Heart right ventricle (tissue), 16 donors: ENCODE measurements at regions of chr17 and their contacts with region 1.

Region 1: DNA sequence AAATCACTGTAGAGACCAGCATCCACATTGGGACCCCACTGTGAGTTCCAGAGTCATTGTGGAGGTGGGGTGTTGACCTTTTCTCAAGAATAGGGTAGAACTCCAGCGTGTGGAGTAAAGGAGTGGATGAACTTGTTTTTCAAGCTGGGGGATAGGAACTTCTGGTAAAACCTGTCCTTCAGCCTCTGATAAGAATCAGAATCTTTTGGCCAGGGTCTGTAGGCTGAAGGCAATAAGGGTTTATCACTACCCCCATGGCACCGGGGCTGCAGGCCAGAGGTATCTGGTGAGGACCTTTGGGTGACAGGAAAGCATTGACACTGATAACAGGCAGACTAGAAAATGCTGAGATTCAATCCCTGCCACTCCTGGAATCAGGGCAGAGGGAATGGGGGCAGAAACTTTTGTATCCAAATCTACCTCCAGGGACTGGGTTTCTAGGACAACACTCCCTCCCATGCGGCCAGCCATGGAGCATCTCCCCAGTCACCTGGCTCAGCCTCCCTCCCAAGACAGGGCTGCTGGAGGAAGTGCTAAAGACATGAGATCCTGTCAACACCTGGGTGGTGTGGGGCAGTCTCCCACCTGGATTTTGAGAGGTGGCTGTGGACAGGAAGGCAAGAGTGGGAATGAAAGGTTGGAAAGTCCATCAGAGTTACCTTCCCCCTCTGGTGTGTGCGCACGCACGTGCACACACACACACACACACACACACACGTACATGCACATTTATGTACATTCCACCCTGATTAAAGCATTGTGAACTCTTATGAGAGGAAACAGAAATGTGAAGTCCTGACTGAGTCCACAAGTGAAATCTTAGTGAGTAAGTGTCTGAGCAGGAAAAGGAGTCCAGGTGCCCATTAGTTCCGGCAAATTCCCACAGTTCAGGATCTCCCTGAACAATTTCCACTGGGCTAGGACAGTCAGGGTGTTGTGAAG is 53.1 kb upstream of the MARCHF10 start:
- DNase-seq: no peak
- ATAC-seq: no peak
- H3K4me3 ChIP-seq: no peak overlapping the region
- H3K27ac ChIP-seq: no peak overlapping the region
- H3K4me1 ChIP-seq: no peaks in the 10 kb centered on the region
- H3K27me3 ChIP-seq: peaks cover 0 to 7% (median 0%) of the 10 kb centered on the region in 7 donors
- CTCF ChIP-seq: no peak

Region 2: DNA sequence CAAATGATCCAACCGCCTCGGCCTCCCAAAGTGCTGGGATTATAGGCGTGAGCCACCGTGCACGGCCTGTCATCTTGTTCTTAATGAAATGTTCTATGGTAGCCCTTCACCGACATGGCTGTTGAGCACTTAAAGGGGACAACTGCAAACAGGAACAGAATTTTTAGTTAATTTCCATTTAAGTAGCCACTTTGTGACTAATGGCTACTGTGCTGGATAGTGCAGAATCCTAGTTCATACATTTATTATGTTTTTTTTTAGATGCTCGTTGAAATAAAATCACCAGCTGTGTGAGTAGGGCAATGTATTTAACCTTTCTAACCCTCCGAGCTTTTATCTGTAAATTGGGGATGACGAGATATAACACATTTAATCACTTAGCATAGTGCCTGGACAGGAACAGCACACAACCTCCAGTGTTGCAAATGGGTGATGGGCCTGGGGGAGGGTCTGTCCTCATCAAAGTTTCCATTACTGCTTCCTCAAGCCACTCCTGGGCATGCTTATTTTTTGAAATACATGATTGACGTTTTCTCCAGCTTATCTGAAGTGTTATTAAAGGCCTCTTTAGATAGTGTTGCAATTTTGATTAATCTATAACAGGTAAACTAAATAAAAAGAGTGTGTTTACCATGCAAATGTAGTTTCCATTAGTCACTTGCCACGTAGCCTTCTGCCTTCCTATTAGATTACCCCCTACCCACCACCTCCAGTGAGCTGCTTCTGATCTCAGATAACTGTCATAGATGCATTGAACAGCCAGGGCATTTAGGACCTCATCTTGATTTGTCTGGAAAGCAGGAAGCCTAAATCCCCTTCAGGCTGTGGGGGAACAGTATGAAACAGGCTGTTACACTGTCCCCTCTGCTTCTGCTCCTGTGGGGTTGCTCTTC is 62.3 kb after region 1 on chr17:
- intact Hi-C with region 1: loop called in 1 of 10 experiments (anchors 10 kb)
- DNase-seq: no peak
- ATAC-seq: no peak
- H3K4me3 ChIP-seq: no peak overlapping the region
- H3K27ac ChIP-seq: no peak overlapping the region
- H3K4me1 ChIP-seq: no peaks in the 10 kb centered on the region
- H3K27me3 ChIP-seq: peaks cover 0 to 3% (median 0%) of the 10 kb centered on the region in 7 donors
- CTCF ChIP-seq: no peak

Region 3: GRCh38 chr17:63001451-63002312 is 140.5 kb after region 1 on chr17:
- intact Hi-C with region 1: no loop called
- DNase-seq: no peak
- ATAC-seq: no peak
- H3K4me3 ChIP-seq: no peak overlapping the region
- H3K27ac ChIP-seq: no peak overlapping the region
- H3K4me1 ChIP-seq: peaks cover 0 to 3% (median 0%) of the 10 kb centered on the region in 9 donors
- H3K27me3 ChIP-seq: no peaks in the 10 kb centered on the region
- CTCF ChIP-seq: no peak